ENCODE measurements at regions of chr12 and their contacts with region 1.

Region 1: DNA sequence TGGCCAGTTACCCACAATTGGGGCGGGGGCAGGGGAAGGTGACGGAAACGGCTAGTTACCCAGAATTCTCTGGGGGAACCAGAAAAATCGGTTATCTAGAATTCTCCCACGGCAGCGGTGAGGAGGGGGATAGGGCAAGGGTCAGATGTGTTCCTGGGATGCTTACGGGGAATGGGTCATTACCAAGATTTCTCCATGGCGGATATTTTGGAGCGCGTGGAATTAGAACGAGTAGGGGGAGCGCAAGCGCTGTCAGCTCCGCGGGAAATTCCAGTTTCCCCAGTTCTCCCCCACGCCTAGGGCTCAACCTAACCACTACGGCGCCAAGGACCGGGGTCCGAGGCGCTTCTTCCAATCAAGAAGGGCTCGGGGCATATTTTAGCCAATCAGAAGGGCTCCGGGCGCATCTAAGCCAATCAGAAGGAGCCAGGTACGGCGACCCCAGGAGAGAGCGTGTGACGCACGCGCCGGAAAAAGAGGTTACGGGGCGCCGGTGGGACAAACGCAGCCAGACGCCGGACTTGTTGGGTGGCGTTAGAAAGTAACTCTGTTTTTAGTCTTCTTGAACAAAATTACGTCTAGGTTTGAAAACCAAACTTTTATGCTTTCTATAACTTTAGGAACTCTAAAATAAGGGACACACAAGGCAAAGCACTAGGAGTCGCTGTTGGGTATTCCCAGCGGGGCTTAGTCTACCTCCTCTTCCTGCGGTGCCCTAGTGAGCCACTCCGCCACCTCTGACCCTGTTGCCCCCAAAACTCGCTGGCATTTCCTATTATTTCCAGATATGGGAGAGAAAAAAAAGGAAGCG is at the start of gene PAN2:
- DNase-seq: peak; percentile 96 to 97
- ATAC-seq: peak; percentile 98 to 99 (median 98)
- H3K4me3 ChIP-seq: peak within 1 kb of the TSS; percentile 94
- H3K27ac ChIP-seq: peak within 1 kb of the TSS; percentile 97
- H3K4me1 ChIP-seq: peaks cover 6% of the 10 kb centered on the region
- H3K27me3 ChIP-seq: no peaks in the 10 kb centered on the region
- CTCF ChIP-seq: peak; percentile 57
- total RNA-seq, gene PAN2: 22.1 to 37.5 (median 28.7) TPM

Region 2: GRCh38 chr12:56468216-56469006 is 134.5 kb after region 1 on chr12 and contains the start of gene SPRYD4:
- intact Hi-C with region 1: loop called in 1 of 2 experiments (anchors 10 kb)
- DNase-seq: peak; percentile 93 to 97
- ATAC-seq: peak; percentile 97 to 98 (median 98)
- H3K4me3 ChIP-seq: peak within 1 kb of the TSS; percentile 81
- H3K27ac ChIP-seq: peak within 1 kb of the TSS; percentile 90
- H3K4me1 ChIP-seq: peaks cover 7% of the 10 kb centered on the region
- H3K27me3 ChIP-seq: no peaks in the 10 kb centered on the region
- CTCF ChIP-seq: peak; percentile 11
- total RNA-seq, gene SPRYD4: 2.8 to 4.4 (median 3.7) TPM

Measured in psoas muscle (tissue), 8 donors.